ENCODE measurements at regions of chr6 and their contacts with region 1.

Region 1: GRCh38 chr6:162181741-162182401 is 545.7 kb downstream of the PRKN start:
- DNase-seq: no peak
- ATAC-seq: no peak

Region 2: GRCh38 chr6:161476711-161477110 is 705.2 kb before region 1 on chr6:
- intact Hi-C with region 1: no loop called
- DNase-seq: peak; percentile 29
- ATAC-seq: peak in 1 of 2 donors; percentile 79

Region 3: GRCh38 chr6:162109480-162110050 is 72.3 kb before region 1 on chr6:
- intact Hi-C with region 1: no loop called
- DNase-seq: no peak
- ATAC-seq: peak in 1 of 2 donors; percentile 53

Region 4: DNA sequence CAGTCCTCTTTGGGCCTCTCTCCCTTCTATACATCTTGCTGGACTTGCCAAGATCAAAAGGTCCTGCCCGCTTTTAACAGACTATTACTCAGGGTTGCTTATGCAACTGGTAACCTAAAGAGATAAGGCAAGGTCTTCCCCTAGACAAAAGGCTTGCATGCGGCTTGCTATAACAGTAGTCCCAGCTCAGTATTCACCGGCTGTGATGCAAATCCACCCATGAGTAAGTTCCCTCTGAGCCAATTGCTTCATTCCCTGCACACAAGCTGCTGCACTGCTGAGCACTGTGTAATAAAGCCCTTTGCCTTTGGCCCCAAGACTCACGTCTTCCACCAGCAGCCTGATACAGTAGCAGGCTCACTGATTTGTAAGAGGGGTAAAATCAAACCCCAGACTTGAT is 181.9 kb after region 1 on chr6:
- intact Hi-C with region 1: loop called in 1 of 2 experiments (anchors 10 kb)
- DNase-seq: no peak
- ATAC-seq: peak in 1 of 2 donors; percentile 62

Region 5: GRCh38 chr6:162727309-162728182 is 545.7 kb after region 1 on chr6 and contains the starts of genes PACRG and PRKN:
- intact Hi-C with region 1: loop called in 1 of 2 experiments (anchors 10 kb)
- DNase-seq: peak; percentile 99
- ATAC-seq: peak; percentile 100
- total RNA-seq, gene PACRG: 3.2 to 4.5 TPM
- total RNA-seq, gene PRKN: 13.8 to 22.2 TPM